ENCODE measurements at regions of chr14 and their contacts with region 1.

Region 1: GRCh38 chr14:91510174-91511042 is at the start of gene PPP4R3A:
- DNase-seq: peak; percentile 90

Region 2: GRCh38 chr14:91286530-91286937 is 223.9 kb before region 1 on chr14:
- CTCF ChIA-PET with region 1: no interaction called
- POLR2A ChIA-PET with region 1: no interaction called
- DNase-seq: peak; percentile 83

Region 3: DNA sequence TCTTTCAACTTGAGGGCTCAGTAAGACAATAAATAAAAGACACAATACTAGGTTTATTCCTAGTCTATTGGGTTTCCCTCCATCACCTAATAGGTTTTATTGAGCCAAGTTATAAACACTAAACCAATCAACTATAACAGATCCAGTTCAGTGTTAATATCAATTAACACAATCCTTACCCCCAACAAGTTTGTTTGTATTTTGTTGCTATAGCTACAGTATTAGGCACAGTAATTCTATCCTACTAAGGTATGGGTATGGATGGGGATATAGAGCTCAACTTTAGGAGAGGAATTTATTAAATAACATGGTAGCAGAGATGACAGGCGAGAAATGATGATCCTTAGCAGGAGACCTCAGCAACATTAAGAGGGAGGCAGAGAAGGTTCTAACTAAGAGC is 13.6 kb before region 1 on chr14:
- CTCF ChIA-PET with region 1: interaction called, 5 read pairs
- POLR2A ChIA-PET with region 1: interaction called, 13 read pairs
- DNase-seq: no peak

Region 4: GRCh38 chr14:91573893-91574837 is 63.8 kb after region 1 on chr14:
- CTCF ChIA-PET with region 1: no interaction called
- POLR2A ChIA-PET with region 1: interaction called, 10 read pairs
- DNase-seq: peak; percentile 56